CD4-positive, alpha-beta memory T cell (primary cell): ENCODE measurements at regions of chr7 and their contacts with region 1.

Region 1: GRCh38 chr7:141701489-141702046 is 398 bp downstream of the DENND11 start:
- DNase-seq: peak; percentile 77 to 88 (median 79)
- H3K4me3 ChIP-seq: peak overlapping the region in 1 of 2 donors; percentile 57
- H3K4me3 Mint-ChIP-seq: peak overlapping the region; percentile 87 to 94 (median 90)
- H3K27ac ChIP-seq: peak overlapping the region; percentile 74
- H3K27ac Mint-ChIP-seq: peak overlapping the region; percentile 87 to 95 (median 93)
- H3K4me1 ChIP-seq: peaks cover 44% of the 10 kb centered on the region
- H3K4me1 Mint-ChIP-seq: peaks cover 36 to 65% (median 47%) of the 10 kb centered on the region in 4 donors
- H3K27me3 ChIP-seq: no peaks in the 10 kb centered on the region
- H3K27me3 Mint-ChIP-seq: peaks cover 0 to 2% of the 10 kb centered on the region in 2 donors

Region 2: GRCh38 chr7:140093375-140093774 is 1608.2 kb before region 1 on chr7:
- CTCF ChIA-PET with region 1: no interaction called
- POLR2A ChIA-PET with region 1: no interaction called
- intact Hi-C with region 1: no loop called
- DNase-seq: no peak
- H3K4me3 ChIP-seq: no peak overlapping the region
- H3K4me3 Mint-ChIP-seq: no peak overlapping the region
- H3K27ac ChIP-seq: no peak overlapping the region
- H3K27ac Mint-ChIP-seq: peak overlapping the region in 3 of 7 donors; percentile 77
- H3K4me1 ChIP-seq: no peaks in the 10 kb centered on the region
- H3K4me1 Mint-ChIP-seq: peaks cover 0 to 2% (median under 1%) of the 10 kb centered on the region in 4 donors
- H3K27me3 ChIP-seq: no peaks in the 10 kb centered on the region
- H3K27me3 Mint-ChIP-seq: no peaks in the 10 kb centered on the region

Region 3: GRCh38 chr7:141220263-141220880 is 481.2 kb before region 1 on chr7:
- CTCF ChIA-PET with region 1: no interaction called
- POLR2A ChIA-PET with region 1: no interaction called
- intact Hi-C with region 1: no loop called
- DNase-seq: no peak
- H3K4me3 ChIP-seq: no peak overlapping the region
- H3K4me3 Mint-ChIP-seq: no peak overlapping the region
- H3K27ac ChIP-seq: no peak overlapping the region
- H3K27ac Mint-ChIP-seq: no peak overlapping the region
- H3K4me1 ChIP-seq: no peaks in the 10 kb centered on the region
- H3K4me1 Mint-ChIP-seq: no peaks in the 10 kb centered on the region
- H3K27me3 ChIP-seq: no peaks in the 10 kb centered on the region
- H3K27me3 Mint-ChIP-seq: peaks cover 2 to 5% of the 10 kb centered on the region in 2 donors

Region 4: GRCh38 chr7:141551094-141551781 is 150.3 kb before region 1 on chr7 and contains the start of gene AGK:
- CTCF ChIA-PET with region 1: no interaction called
- POLR2A ChIA-PET with region 1: interaction called, 4 read pairs
- intact Hi-C with region 1: loop called (anchors 10 kb)
- DNase-seq: peak; percentile 72 to 80 (median 75)
- H3K4me3 ChIP-seq: peak within 1 kb of the TSS; percentile 32 to 70
- H3K4me3 Mint-ChIP-seq: peak within 1 kb of the TSS; percentile 78 to 96 (median 93)
- H3K27ac ChIP-seq: peak within 1 kb of the TSS; percentile 56
- H3K27ac Mint-ChIP-seq: peak within 1 kb of the TSS; percentile 50 to 96 (median 91)
- H3K4me1 ChIP-seq: peaks cover 28% of the 10 kb centered on the region
- H3K4me1 Mint-ChIP-seq: peaks cover 20 to 40% (median 34%) of the 10 kb centered on the region in 4 donors
- H3K27me3 ChIP-seq: no peaks in the 10 kb centered on the region
- H3K27me3 Mint-ChIP-seq: peaks cover 0 to 2% of the 10 kb centered on the region in 2 donors
- total RNA-seq, gene AGK: 28.1 to 30.0 TPM